ENCODE measurements at regions of chr14 and their contacts with region 1.

Region 1: GRCh38 chr14:95527387-95528002 is 7.4 kb upstream of the GLRX5 start:
- DNase-seq: peak; percentile 87
- H3K4me3 Mint-ChIP-seq: peak overlapping the region; percentile 61
- H3K27ac Mint-ChIP-seq: peak overlapping the region; percentile 77
- H3K4me1 Mint-ChIP-seq: peaks cover 71% of the 10 kb centered on the region
- H3K27me3 Mint-ChIP-seq: no peaks in the 10 kb centered on the region

Region 2: DNA sequence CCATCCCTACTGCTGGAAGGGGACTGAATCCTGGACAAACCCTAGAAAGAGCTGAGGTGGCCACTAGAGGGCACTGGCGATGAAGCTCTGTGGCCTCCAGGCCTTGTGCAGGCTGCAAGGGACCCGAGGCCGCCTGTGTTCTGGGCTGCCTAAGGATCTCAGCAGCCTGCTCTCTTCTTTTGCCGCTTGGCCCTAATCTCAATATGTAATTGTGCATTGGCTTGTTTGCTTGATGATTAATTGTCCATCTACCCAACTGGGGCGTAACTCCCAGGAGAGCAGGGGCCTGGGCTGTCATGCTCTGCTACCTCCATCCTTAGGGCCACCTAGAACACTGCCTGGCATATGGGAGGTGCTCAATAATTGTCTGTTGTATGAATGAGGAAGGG is 84.9 kb before region 1 on chr14:
- intact Hi-C with region 1: loop called (anchors 1 kb)
- DNase-seq: peak; percentile 91
- H3K4me3 Mint-ChIP-seq: no peak overlapping the region
- H3K27ac Mint-ChIP-seq: peak overlapping the region; percentile 5
- H3K4me1 Mint-ChIP-seq: peaks cover 3% of the 10 kb centered on the region
- H3K27me3 Mint-ChIP-seq: no peaks in the 10 kb centered on the region

Region 3: DNA sequence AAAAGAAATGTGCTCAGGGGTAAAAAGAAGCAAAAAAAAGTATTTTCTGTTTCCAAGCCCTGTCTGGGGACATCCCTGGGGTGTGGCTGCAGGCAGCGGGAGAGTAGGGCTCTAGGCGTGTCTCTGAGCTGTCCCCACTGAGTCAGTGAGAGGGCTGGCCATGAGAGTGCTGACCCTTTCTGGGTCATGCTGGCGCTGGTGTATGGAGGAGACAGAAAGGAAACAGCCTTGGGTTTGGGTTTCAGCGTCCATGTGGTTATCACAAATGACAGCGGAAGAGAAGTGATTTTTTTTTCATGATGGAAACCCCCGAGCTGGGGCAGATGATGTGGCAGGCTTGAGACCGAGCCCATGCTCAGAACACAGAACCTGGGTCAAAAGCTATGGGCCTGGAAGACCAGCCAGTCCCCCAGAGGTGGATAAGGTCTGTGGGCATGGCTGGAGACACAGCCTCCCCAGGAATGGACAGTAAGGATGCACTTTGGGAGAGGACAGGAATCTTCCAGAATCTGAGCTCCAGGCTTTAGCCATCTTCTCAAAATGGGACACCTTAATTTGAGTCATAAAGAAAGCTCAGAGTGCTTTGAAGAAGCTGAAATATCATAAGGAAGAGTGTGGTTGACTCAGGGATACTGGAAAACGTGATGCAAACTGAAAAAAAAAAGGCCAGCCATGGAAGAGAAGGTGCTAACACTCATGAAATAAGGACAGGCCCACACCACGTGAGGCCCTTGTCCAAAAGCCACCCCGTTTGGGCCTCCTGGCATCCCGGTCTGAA is 47.2 kb before region 1 on chr14:
- intact Hi-C with region 1: loop called (anchors 1 kb)
- DNase-seq: peak; percentile 79
- H3K4me3 Mint-ChIP-seq: peak overlapping the region; percentile 38
- H3K27ac Mint-ChIP-seq: peak overlapping the region; percentile 95
- H3K4me1 Mint-ChIP-seq: peaks cover 35% of the 10 kb centered on the region
- H3K27me3 Mint-ChIP-seq: no peaks in the 10 kb centered on the region

Region 4: GRCh38 chr14:95495538-95496025 is 31.9 kb before region 1 on chr14:
- intact Hi-C with region 1: loop called (anchors 1 kb)
- DNase-seq: peak; percentile 71
- H3K4me3 Mint-ChIP-seq: peak overlapping the region; percentile 18
- H3K27ac Mint-ChIP-seq: peak overlapping the region; percentile 92
- H3K4me1 Mint-ChIP-seq: peaks cover 53% of the 10 kb centered on the region
- H3K27me3 Mint-ChIP-seq: no peaks in the 10 kb centered on the region

Region 5: GRCh38 chr14:95515596-95516552 is 11.6 kb before region 1 on chr14:
- intact Hi-C with region 1: loop called (anchors 1 kb)
- DNase-seq: peak; percentile 96
- H3K4me3 Mint-ChIP-seq: peak overlapping the region; percentile 95
- H3K27ac Mint-ChIP-seq: peak overlapping the region; percentile 90
- H3K4me1 Mint-ChIP-seq: peaks cover 60% of the 10 kb centered on the region
- H3K27me3 Mint-ChIP-seq: no peaks in the 10 kb centered on the region

Measured in activated CD4-positive, alpha-beta T cell treated with anti-CD3 and anti-CD28 coated beads, Interleukin-2, amount 10 ng/mL, durations not matched to agents 24 days and 14 days (primary cell).